ENCODE measurements at regions of chr7 and their contacts with region 1.

Region 1: GRCh38 chr7:8418629-8419245 is 14.7 kb upstream of the NXPH1 start:
- DNase-seq: peak; percentile 78
- H3K4me3 Mint-ChIP-seq: no peak overlapping the region
- H3K27ac Mint-ChIP-seq: no peak overlapping the region
- H3K4me1 Mint-ChIP-seq: no peaks in the 10 kb centered on the region
- H3K27me3 Mint-ChIP-seq: no peaks in the 10 kb centered on the region

Region 2: GRCh38 chr7:8277394-8277982 is 141.2 kb before region 1 on chr7:
- intact Hi-C with region 1: no loop called
- DNase-seq: no peak
- H3K4me3 Mint-ChIP-seq: no peak overlapping the region
- H3K27ac Mint-ChIP-seq: no peak overlapping the region
- H3K4me1 Mint-ChIP-seq: no peaks in the 10 kb centered on the region
- H3K27me3 Mint-ChIP-seq: peaks cover 7% of the 10 kb centered on the region

Region 3: DNA sequence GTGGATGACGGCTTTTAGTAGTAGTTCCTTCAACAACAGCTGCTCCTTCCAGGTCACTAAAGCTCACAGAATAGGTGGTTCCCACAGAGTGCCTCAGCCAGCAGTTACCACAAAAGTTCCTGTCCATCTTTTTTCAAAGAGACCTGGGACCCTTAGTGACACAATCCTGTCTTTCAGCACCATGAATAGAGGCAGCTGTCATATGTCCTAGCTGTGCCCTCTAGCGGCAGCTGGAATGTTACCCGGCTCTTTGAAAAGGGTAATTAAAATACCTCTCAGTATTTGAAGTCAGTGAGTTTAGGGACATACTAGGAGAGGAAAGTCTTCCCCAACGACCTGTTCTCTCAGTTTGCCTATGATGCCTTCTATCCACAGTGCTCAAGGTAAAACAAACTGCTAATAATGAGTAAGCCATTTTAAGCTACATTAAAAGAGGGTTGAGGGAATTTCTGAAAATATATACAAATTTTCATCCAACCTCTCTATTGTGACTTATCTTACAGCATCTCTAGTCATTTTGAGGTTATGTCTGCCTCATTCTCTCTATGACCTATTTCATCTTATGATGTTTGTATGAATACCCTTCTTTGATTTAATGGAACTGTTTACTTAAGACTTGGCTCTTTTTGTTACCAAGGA is 305.5 kb after region 1 on chr7:
- intact Hi-C with region 1: loop called (anchors 2 kb)
- DNase-seq: peak; percentile 70
- H3K4me3 Mint-ChIP-seq: no peak overlapping the region
- H3K27ac Mint-ChIP-seq: no peak overlapping the region
- H3K4me1 Mint-ChIP-seq: no peaks in the 10 kb centered on the region
- H3K27me3 Mint-ChIP-seq: no peaks in the 10 kb centered on the region

Region 4: DNA sequence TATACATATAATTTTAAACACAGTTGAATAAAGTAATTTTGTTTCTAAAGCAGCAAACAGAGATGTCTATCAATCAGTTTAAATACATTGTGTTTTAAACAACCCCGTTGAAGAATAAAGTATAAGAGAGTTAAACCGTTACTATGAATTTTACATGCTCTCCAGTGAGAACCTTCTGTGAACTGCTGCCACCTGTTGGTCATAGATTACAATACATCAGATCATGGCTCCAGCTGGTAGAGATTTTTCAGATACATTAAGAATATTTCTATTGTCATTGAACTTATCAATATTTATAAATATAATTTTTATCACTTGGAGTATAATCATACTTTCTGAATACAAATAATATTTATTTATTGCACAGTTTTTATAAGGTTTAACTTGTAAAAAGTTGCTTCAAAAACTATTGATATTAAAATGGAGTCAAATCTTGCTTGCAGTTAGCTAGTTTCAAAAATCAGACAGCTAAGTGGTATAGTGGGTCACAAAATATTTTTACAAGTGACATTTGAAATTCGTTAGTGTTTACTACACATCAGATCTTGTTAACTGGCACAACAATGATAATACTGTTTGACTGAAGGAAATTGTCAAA is 1993.8 kb after region 1 on chr7:
- intact Hi-C with region 1: loop called (anchors 5 kb)
- DNase-seq: peak; percentile 70
- H3K4me3 Mint-ChIP-seq: no peak overlapping the region
- H3K27ac Mint-ChIP-seq: no peak overlapping the region
- H3K4me1 Mint-ChIP-seq: no peaks in the 10 kb centered on the region
- H3K27me3 Mint-ChIP-seq: no peaks in the 10 kb centered on the region

Measured in activated CD4-positive, alpha-beta T cell treated with anti-CD3 and anti-CD28 coated beads, Interleukin-2, amount 10 ng/mL, durations not matched to agents 24 days and 14 days (primary cell).